ENCODE measurements at regions of chr6 and their contacts with region 1.

Region 1: DNA sequence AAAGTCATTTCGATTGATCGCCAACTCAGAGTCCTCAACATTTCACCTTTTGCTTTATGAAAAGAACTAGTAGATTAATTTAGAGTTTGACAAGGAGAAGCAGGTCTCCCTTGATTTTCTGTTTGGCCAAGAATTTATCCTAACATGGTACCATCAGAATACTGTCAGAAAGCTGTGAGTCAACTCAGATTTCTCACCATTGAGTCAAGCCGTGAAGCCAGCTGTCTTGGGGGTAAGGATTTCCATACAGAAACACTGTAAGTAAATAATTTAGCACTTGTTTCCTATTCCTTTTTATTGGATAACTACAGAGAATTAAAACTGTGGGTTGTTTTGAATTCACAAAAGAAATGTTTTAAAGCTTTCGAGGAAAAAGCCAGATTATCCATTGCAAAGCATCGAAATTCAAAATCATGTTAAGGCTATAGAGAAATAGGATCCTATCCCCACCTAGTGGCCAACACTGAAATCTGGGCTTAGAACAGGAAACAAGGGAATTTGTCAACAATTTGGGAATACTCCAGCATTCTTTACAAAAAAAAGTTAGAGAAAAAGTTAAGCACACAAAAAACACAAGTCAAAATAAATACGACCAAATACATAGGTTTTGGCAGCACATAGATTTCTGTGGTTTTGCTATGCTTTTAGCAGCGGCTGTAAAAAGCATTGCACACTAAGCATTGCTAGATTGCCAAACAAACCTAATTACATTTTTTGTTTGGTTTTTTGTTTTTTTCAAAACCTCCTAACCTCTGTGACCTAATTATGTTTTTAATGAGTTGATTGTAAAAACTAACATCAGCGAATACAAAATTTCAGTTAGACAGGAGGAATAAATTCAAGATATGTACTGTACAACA is 44.2 kb downstream of the COL11A2 start:
- DNase-seq: peak; percentile 39
- CTCF ChIP-seq: peak; percentile 77

Region 2: DNA sequence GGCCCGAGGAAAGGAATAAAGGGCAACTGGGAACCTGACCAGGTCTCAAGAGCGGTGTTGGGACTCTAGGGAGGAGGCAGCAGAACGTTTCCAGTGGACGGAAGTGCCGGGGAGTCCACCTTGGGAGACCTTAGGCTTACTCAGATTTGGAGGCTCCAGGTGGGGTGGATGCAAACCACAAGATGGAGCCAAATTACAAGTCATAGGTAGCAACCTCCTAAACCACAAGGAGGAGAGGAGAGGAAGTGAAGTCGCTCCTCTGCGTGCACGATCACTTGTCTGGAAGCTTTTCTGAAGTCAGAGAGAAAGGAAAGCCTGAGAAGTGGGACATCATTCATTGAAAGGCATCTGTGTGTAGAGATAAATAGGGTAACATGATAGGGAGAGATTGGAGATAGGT is 148.0 kb before region 1 on chr6:
- CTCF ChIA-PET with region 1: interaction called, 10 read pairs
- POLR2A ChIA-PET with region 1: no interaction called
- DNase-seq: peak; percentile 60
- CTCF ChIP-seq: peak; percentile 31

Region 3: GRCh38 chr6:33118525-33119123 is 29.4 kb before region 1 on chr6:
- CTCF ChIA-PET with region 1: interaction called, 86 read pairs
- POLR2A ChIA-PET with region 1: no interaction called
- DNase-seq: peak; percentile 45
- CTCF ChIP-seq: peak; percentile 67

Region 4: GRCh38 chr6:33126101-33126714 is 21.8 kb before region 1 on chr6:
- CTCF ChIA-PET with region 1: interaction called, 86 read pairs
- POLR2A ChIA-PET with region 1: no interaction called
- DNase-seq: peak; percentile 64
- CTCF ChIP-seq: peak; percentile 58

Region 5: GRCh38 chr6:33132081-33132524 is 15.9 kb before region 1 on chr6:
- CTCF ChIA-PET with region 1: interaction called, 86 read pairs
- POLR2A ChIA-PET with region 1: no interaction called
- DNase-seq: no peak
- CTCF ChIP-seq: no peak

Region 6: GRCh38 chr6:33172688-33173534 is 24.9 kb after region 1 on chr6:
- CTCF ChIA-PET with region 1: interaction called, 12 read pairs
- POLR2A ChIA-PET with region 1: no interaction called
- DNase-seq: peak; percentile 73
- CTCF ChIP-seq: peak; percentile 64

Measured in GM10248 (cell line).